ENCODE measurements at regions of chr12 and their contacts with region 1.

Region 1: DNA sequence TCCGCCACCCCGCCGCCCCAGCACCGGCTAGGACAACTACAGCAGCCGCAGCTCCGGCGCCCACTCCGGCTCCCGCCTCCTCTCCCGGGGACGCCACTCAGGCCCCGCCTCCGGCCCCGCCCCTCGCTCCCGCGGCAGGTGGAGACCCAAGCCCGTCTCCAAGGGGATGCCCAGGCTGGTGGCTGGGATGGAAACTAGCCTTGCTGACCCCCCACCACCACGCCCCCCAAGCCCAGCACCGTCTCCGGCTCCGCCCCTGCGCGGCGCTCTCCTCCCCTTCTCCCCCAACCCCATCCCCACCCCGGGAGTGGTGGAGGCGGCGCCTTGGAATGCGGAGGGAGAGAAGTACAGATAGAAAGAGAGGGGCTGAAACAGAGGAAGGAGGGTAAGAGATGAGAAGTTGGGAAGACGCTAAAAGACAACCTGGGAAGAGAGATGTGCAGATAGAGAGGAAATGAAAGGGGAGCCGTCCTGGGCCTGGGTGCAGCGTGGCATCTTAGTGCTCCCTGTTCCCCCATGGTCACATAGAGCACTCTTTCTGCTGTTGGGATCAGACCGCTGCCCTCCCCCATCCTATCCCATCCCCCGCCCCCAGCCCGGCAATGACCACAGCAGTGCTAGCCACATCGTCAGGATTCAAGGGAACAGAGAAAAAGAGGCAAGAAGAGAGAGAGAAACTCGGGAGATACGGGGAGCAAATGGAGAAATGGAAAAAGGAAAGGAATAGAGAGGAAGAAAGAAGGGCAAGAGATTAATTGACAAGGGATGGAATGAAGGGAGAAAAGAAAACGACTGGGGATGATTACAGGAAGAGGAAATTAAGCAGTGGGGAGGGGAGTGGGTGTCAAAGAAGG is at the start of gene ITGA7:
- DNase-seq: peak; percentile 76 to 86
- H3K4me3 ChIP-seq: peak within 1 kb of the TSS; percentile 78
- H3K4me3 Mint-ChIP-seq: peak within 1 kb of the TSS; percentile 78
- H3K27ac Mint-ChIP-seq: no peak within 1 kb of the TSS
- H3K4me1 ChIP-seq: peaks cover 37% of the 10 kb centered on the region
- H3K4me1 Mint-ChIP-seq: peaks cover 18% of the 10 kb centered on the region
- H3K27me3 ChIP-seq: no peaks in the 10 kb centered on the region
- H3K27me3 Mint-ChIP-seq: peaks cover 18% of the 10 kb centered on the region
- CTCF ChIP-seq: no peak
- total RNA-seq, gene ITGA7: 46.1 and 47.0 TPM in 2 replicates

Region 2: DNA sequence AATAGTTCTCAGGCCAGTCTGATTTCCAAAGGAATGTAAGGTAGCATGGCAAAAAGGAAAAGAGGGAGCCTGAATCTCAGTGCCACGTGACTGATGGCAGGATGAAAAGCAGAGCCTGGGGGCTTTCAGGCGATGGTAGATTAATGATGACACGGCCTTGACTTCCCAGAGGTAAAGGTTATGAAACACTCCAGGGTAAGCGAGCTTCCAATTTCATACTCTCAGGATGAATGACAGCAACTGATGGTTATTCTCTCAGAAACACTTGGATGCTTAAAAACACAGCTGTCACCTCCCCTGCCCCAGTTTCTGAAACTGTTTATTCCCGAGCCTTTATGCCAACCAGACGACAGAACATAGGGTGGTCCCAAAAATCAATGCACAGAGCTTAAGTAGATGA is 63.7 kb after region 1 on chr12:
- CTCF ChIA-PET with region 1: no interaction called
- POLR2A ChIA-PET with region 1: no interaction called
- intact Hi-C with region 1: no loop called
- DNase-seq: no peak
- H3K4me3 ChIP-seq: no peak overlapping the region
- H3K4me3 Mint-ChIP-seq: no peak overlapping the region
- H3K27ac Mint-ChIP-seq: no peak overlapping the region
- H3K4me1 ChIP-seq: no peaks in the 10 kb centered on the region
- H3K4me1 Mint-ChIP-seq: peaks cover 7% of the 10 kb centered on the region
- H3K27me3 ChIP-seq: no peaks in the 10 kb centered on the region
- H3K27me3 Mint-ChIP-seq: no peaks in the 10 kb centered on the region
- CTCF ChIP-seq: no peak

Region 3: DNA sequence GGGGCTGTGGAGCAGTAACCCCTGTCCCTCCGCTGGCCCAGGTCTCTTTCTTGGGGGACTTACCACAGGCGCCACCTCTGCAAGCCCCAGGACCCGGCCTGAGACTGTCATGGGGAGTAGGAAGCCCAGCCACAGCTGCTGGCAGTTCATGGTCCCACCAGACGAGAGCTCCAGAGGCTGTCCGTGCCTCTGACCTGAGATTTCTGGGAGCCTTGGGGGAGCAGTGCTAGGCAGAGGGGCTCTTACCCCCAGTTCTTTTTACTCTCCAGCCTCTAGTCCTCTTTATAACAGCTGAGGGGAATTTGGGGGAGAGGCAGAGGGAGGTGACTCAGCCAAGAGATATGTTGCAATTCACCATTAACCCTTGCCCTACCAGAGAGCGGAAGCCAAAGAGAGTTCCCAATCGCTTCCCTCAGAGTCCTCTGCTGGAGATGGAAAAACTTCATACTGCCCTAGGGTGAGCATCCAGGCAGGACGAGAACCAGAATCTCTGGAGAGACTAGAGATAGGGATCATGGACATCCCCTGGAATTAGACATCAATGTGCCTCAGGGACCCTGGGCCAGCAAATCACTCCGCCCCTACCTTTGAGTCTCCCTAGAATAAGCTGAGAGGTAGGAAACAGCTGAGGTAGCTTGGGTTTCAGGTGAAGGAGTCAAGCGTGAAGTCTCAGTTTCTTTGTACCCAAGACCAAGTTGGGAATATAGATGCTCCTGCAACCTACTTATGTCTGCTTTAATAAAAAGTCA is 134.8 kb after region 1 on chr12 and contains the start of gene MMP19:
- CTCF ChIA-PET with region 1: no interaction called
- POLR2A ChIA-PET with region 1: interaction called, 10 read pairs
- intact Hi-C with region 1: no loop called
- DNase-seq: peak in 1 of 2 experiments; percentile 52
- H3K4me3 ChIP-seq: no peak within 1 kb of the TSS
- H3K4me3 Mint-ChIP-seq: peak within 1 kb of the TSS; percentile 41
- H3K27ac Mint-ChIP-seq: peak within 1 kb of the TSS; percentile 43
- H3K4me1 ChIP-seq: peaks cover 9% of the 10 kb centered on the region
- H3K4me1 Mint-ChIP-seq: peaks cover 15% of the 10 kb centered on the region
- H3K27me3 ChIP-seq: no peaks in the 10 kb centered on the region
- H3K27me3 Mint-ChIP-seq: no peaks in the 10 kb centered on the region
- CTCF ChIP-seq: no peak
- total RNA-seq, gene MMP19: 1.9 and 2.2 TPM in 2 replicates

Measured in Caco-2 (cell line).